A673 (cell line): ENCODE measurements at regions of chr16 and their contacts with region 1.

Region 1: DNA sequence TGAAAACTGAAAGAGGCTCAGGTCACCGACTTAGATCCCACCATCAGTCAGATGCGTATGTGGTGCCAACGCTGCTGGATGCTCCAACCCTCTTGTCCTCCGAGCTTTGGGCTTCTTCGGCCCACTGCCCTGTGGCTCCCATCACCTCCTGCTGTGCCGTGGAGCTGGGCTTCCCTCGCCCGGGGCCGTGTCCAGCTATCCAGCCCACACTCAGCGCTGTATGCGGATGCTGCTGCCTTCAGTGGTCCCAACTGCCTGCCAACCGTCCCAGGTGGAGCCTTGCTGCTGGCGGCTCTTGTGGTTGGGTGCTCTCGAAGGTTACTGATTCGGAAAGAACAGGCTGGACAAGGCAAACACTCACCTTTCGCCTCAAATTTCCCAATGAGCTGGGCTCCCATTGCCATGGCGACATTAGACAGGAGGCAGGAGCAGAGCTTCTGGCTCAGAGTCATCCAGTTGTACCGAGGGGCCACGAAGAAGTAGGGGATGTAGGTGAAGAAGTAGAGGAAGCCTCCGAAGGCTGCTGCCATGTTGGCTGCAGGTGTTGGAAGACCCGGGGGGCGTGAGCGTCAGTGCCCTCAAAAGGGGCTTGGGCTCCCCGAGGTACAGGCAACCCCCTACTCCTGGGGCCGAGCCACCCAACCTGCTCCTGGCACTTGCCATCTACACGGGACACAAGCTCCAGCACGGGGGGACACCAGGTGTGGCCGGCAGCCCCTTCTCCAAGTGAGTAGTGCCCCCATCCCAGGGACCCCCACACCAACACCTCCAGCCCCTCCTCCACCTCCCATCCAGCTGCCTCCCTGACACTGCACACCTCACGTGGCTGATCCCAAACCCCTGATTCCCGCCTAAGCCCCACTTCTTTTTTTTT is 32.2 kb downstream of the ABCA3 start:
- DNase-seq: no peak
- H3K4me3 ChIP-seq: no peak overlapping the region
- H3K27ac ChIP-seq: no peak overlapping the region
- H3K4me1 ChIP-seq: no peaks in the 10 kb centered on the region
- H3K27me3 ChIP-seq: no peaks in the 10 kb centered on the region
- CTCF ChIP-seq: no peak

Region 2: GRCh38 chr16:2429771-2430663 is 121.7 kb after region 1 on chr16:
- CTCF ChIA-PET with region 1: no interaction called
- POLR2A ChIA-PET with region 1: no interaction called
- intact Hi-C with region 1: no loop called
- DNase-seq: peak; percentile 40
- H3K4me3 ChIP-seq: peak overlapping the region; percentile 100
- H3K27ac ChIP-seq: peak overlapping the region; percentile 96
- H3K4me1 ChIP-seq: peaks cover 27% of the 10 kb centered on the region
- H3K27me3 ChIP-seq: no peaks in the 10 kb centered on the region
- CTCF ChIP-seq: peak; percentile 23; the same call in 1 of the 2 replicates

Region 3: GRCh38 chr16:2763173-2763572 is 454.8 kb after region 1 on chr16:
- CTCF ChIA-PET with region 1: no interaction called
- POLR2A ChIA-PET with region 1: interaction called, 15 read pairs
- intact Hi-C with region 1: no loop called
- DNase-seq: no peak
- H3K4me3 ChIP-seq: no peak overlapping the region
- H3K27ac ChIP-seq: no peak overlapping the region
- H3K4me1 ChIP-seq: no peaks in the 10 kb centered on the region
- H3K27me3 ChIP-seq: no peaks in the 10 kb centered on the region
- CTCF ChIP-seq: no peak